Endothelial cell of umbilical vein (primary cell): ENCODE measurements at regions of chr9 and their contacts with region 1.

Region 1: GRCh38 chr9:121249563-121249962 is 18.4 kb upstream of the GSN start:
- DNase-seq: no peak
- H3K4me3 ChIP-seq: no peak overlapping the region
- H3K27ac ChIP-seq: no peak overlapping the region
- H3K4me1 ChIP-seq: no peaks in the 10 kb centered on the region
- H3K27me3 ChIP-seq: peaks cover 13 to 14% of the 10 kb centered on the region in 2 experiments
- CTCF ChIP-seq: no peak
- POLR2A ChIP-seq: no peak

Region 2: GRCh38 chr9:120730661-120731514 is 518.7 kb before region 1 on chr9:
- CTCF ChIA-PET with region 1: no interaction called
- POLR2A ChIA-PET with region 1: no interaction called
- dilution Hi-C with region 1: no loop called
- intact Hi-C with region 1: no loop called
- DNase-seq: peak; percentile 92
- H3K4me3 ChIP-seq: no peak overlapping the region
- H3K27ac ChIP-seq: no peak overlapping the region
- H3K4me1 ChIP-seq: peaks cover 15% of the 10 kb centered on the region
- H3K27me3 ChIP-seq: no peaks in the 10 kb centered on the region
- CTCF ChIP-seq: no peak
- POLR2A ChIP-seq: peak; percentile 38

Region 3: DNA sequence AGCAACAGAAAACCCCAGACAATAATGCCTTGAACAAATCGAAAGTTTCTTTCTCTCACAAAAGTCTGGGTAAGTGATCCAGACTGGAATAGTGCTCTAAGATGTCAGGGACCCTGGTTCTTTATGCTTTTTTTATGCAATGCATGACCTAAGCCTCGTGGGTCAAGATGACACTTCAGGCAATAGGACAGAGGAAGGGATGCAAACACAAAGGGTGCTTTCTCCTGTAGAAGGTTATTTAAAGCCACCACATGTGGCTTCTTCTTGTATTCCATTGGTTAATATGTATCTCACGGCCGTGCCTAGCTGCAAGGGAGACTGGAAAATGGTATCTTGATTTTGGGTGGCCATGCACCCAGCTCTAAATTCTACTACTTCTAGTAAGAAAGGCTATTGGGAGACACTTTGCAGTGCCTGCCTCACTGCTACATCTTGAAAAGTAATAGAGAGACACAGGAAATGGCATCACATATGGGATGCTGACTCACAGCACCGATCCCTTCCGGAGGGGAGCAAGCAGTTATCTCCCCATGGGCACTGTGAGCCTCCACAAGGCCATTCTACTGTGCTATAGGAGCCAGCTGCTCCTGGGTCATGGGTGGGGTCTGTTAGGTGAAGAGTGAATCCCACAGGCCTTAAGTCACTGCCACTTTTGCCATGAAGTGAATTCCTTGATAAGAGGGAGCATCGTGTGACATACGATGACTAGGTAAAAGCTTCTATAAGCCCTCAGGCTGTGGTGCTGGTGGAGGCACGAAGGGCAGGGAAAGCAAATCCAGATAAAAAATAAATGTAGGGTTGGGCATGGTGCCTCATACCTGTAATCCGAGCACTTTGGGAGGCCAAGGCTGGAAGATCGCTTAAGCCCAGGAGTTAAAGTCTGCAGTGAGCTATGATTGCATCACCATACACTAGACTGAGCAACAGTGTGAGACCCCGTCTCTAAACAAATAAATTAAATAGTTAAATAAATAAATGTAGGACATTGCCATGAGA is 15.4 kb before region 1 on chr9:
- CTCF ChIA-PET with region 1: interaction called, 10 read pairs
- POLR2A ChIA-PET with region 1: no interaction called
- dilution Hi-C with region 1: no loop called
- intact Hi-C with region 1: no loop called
- DNase-seq: no peak
- H3K4me3 ChIP-seq: no peak overlapping the region
- H3K27ac ChIP-seq: no peak overlapping the region
- H3K4me1 ChIP-seq: peaks cover 6% of the 10 kb centered on the region
- H3K27me3 ChIP-seq: peaks cover 0 to 3% of the 10 kb centered on the region in 2 experiments
- CTCF ChIP-seq: no peak
- POLR2A ChIP-seq: no peak

Region 4: DNA sequence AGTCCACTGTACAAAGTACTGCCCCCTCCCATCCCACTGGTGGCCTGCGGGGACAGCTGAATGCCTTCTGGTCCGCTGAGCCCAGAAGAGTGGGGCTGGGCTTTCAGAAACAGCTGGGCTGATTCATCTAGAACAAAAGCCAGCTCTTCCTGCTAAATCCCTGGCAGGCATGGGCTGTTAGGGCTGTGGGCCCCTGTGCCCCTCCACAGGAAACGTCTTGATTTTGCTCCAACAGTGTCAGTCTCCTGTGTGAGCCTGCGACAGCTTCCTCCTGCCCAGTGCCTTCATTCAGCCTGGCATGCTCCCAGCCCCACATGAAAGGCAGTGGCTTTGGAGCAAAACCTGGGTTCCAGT is 11.5 kb after region 1 on chr9:
- CTCF ChIA-PET with region 1: interaction called, 12 read pairs
- POLR2A ChIA-PET with region 1: no interaction called
- dilution Hi-C with region 1: no loop called
- intact Hi-C with region 1: no loop called
- DNase-seq: peak; percentile 63
- H3K4me3 ChIP-seq: no peak overlapping the region
- H3K27ac ChIP-seq: peak overlapping the region; percentile 13
- H3K4me1 ChIP-seq: peaks cover 17% of the 10 kb centered on the region
- H3K27me3 ChIP-seq: peaks cover 0 to 5% of the 10 kb centered on the region in 2 experiments
- CTCF ChIP-seq: no peak
- POLR2A ChIP-seq: no peak

Region 5: DNA sequence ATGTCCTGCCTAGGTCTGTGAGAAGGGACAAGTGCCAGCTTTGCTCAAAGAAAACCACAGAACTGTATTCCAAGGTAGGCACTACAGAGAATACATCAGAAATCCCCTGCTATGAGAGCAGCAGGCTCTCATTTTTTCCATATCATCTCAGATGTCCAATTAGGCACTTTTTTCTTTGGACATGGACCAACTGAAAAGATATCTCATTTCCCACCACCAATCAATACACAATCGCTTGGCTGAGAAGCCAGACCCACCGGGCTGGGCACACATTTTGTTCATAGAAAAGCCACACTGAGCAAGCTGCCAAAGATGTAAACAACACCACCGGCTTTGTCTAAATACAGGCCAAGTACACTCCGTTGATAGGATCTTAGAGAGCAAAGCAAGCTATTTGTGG is 94.6 kb after region 1 on chr9:
- CTCF ChIA-PET with region 1: no interaction called
- POLR2A ChIA-PET with region 1: no interaction called
- dilution Hi-C with region 1: no loop called
- intact Hi-C with region 1: no loop called
- DNase-seq: no peak
- H3K4me3 ChIP-seq: no peak overlapping the region
- H3K27ac ChIP-seq: no peak overlapping the region
- H3K4me1 ChIP-seq: no peaks in the 10 kb centered on the region
- H3K27me3 ChIP-seq: no peaks in the 10 kb centered on the region
- CTCF ChIP-seq: no peak
- POLR2A ChIP-seq: no peak